Activated B cell treated with CpG ODN at 0.5 μM for 24 hours (primary cell): ENCODE measurements at regions of chr16 and their contacts with region 1.

Region 1: DNA sequence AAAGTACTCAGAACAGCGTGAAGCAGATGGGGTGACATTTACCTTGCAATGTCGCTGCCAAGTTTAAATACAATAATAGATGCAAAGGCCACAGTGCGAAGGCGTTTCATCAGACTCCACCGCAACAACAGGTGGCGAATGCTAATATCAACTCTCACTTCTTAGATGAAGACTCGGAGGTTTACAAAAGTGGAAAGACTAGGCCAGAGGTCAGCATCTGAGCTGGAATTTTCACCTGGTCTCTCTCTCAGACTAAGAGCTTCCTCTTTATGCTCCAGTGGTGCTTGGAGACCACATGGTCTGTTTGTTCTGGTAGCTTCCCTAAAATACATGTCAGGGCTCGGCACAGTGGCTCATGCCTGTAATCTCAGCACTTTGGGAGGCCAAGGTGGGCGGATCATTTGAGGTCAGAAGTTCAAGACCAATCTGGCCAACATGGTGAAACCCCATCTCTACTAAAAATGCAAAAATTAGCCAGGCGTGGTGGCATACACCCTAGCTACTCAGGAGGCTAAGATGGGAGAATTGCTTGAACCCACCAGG is 169.1 kb downstream of the XYLT1 start:
- DNase-seq: peak; percentile 62
- ATAC-seq: peak; percentile 86
- H3K4me3 Mint-ChIP-seq: peak overlapping the region; percentile 58
- H3K27ac Mint-ChIP-seq: peak overlapping the region; percentile 85
- H3K4me1 Mint-ChIP-seq: peaks cover 71% of the 10 kb centered on the region
- H3K27me3 Mint-ChIP-seq: no peaks in the 10 kb centered on the region
- CTCF ChIP-seq: no peak

Region 2: DNA sequence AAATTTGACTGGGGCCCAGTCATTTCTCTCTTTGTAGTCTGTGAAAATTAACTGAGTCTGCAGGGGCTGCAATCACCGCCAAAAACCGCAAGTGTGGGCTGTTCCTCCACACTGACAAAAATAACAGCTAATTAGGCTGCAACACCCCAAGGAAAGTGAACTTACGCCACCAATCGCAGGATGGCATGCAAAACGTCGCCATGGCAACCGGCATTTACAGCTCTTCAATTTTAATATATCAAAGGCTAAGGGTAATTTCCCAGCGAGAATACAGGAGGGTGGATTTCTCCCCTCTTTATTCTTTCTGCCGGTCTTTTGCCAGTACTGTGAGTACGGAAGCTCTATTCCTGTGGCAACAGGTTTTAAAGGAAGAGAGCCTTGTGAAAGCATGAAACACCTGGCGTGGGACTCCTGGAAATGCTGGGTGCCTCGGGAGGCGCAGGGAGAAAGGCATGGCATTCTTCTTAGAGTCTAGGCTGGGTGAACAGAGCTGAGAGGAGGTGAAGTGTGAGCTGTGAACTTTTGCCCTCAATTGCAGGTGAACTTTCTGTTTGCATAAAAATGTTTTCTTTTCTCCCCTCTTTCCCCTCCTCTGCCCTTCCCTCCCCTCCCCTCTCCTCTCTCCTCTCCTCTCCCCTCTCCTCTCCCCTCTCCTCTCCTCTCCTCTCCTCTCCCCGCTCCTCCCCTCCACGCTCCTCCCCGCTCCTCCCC is 230.6 kb before region 1 on chr16:
- CTCF ChIA-PET with region 1: interaction called, 3 read pairs
- POLR2A ChIA-PET with region 1: interaction called, 8 read pairs
- intact Hi-C with region 1: loop called (anchors 5 kb)
- DNase-seq: peak; percentile 67
- ATAC-seq: peak; percentile 82
- H3K4me3 Mint-ChIP-seq: peak overlapping the region; percentile 88
- H3K27ac Mint-ChIP-seq: peak overlapping the region; percentile 98
- H3K4me1 Mint-ChIP-seq: peaks cover 59% of the 10 kb centered on the region
- H3K27me3 Mint-ChIP-seq: no peaks in the 10 kb centered on the region
- CTCF ChIP-seq: no peak

Region 3: GRCh38 chr16:17312094-17312710 is 10.5 kb after region 1 on chr16:
- CTCF ChIA-PET with region 1: interaction called, 3 read pairs
- POLR2A ChIA-PET with region 1: interaction called, 20 read pairs
- intact Hi-C with region 1: loop called (anchors 1 kb)
- DNase-seq: peak; percentile 38
- ATAC-seq: peak; percentile 93
- H3K4me3 Mint-ChIP-seq: peak overlapping the region; percentile 71
- H3K27ac Mint-ChIP-seq: peak overlapping the region; percentile 92
- H3K4me1 Mint-ChIP-seq: peaks cover 64% of the 10 kb centered on the region
- H3K27me3 Mint-ChIP-seq: no peaks in the 10 kb centered on the region
- CTCF ChIP-seq: no peak

Region 4: DNA sequence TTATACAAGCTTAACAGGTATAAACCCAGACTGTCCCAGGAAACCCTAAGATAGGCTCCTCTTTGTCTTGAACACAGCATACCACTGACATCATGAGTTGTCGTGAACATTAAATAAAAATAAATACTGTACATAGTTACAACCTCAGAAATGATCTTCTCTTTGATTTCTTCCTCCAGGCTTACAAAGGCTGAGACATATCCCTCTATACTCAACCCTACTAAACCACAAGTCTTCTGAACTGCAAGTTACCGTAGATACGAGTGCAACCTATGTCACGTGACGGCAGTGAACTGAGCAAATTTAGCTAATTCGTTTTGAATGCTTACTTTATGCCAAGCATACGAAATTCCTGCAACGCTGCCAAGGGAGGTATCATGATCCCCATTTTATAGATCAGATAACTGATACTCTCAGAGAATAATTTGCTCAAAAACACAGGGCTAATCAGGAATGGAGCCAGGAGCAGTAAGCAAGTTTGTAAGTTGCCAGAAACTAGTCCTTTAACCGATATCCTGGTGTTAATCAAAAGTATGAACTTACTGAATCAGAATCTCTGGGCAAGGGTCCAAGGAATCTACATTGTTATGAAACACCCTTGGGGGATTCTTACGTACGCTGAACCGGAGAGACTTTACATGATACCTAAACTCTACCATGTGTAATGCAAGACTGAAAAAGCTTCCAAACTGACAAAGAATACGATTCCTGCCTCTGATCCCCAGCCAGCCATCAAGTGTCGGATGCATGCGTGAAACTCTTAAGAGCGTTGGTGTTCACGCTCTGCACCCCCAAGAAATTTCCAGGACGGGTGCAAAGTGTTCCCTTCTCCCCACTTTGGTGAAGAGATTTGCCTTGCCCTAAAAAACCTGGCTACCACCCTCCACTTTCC is 62.9 kb after region 1 on chr16:
- CTCF ChIA-PET with region 1: interaction called, 10 read pairs
- POLR2A ChIA-PET with region 1: interaction called, 46 read pairs
- intact Hi-C with region 1: loop called (anchors 2 kb)
- DNase-seq: no peak
- ATAC-seq: no peak
- H3K4me3 Mint-ChIP-seq: no peak overlapping the region
- H3K27ac Mint-ChIP-seq: peak overlapping the region; percentile 51
- H3K4me1 Mint-ChIP-seq: peaks cover 98% of the 10 kb centered on the region
- H3K27me3 Mint-ChIP-seq: no peaks in the 10 kb centered on the region
- CTCF ChIP-seq: no peak

Region 5: GRCh38 chr16:17459530-17460521 is 158.2 kb after region 1 on chr16:
- CTCF ChIA-PET with region 1: interaction called, 5 read pairs
- POLR2A ChIA-PET with region 1: interaction called, 15 read pairs
- intact Hi-C with region 1: loop called (anchors 1 kb)
- DNase-seq: peak; percentile 40
- ATAC-seq: peak; percentile 87
- H3K4me3 Mint-ChIP-seq: peak overlapping the region; percentile 77
- H3K27ac Mint-ChIP-seq: peak overlapping the region; percentile 65
- H3K4me1 Mint-ChIP-seq: peaks cover 55% of the 10 kb centered on the region
- H3K27me3 Mint-ChIP-seq: no peaks in the 10 kb centered on the region
- CTCF ChIP-seq: no peak

Region 6: GRCh38 chr16:17511340-17511739 is 209.7 kb after region 1 on chr16:
- CTCF ChIA-PET with region 1: no interaction called
- POLR2A ChIA-PET with region 1: no interaction called
- intact Hi-C with region 1: no loop called
- DNase-seq: no peak
- ATAC-seq: no peak
- H3K4me3 Mint-ChIP-seq: no peak overlapping the region
- H3K27ac Mint-ChIP-seq: no peak overlapping the region
- H3K4me1 Mint-ChIP-seq: no peaks in the 10 kb centered on the region
- H3K27me3 Mint-ChIP-seq: peaks cover 21% of the 10 kb centered on the region
- CTCF ChIP-seq: no peak